HepG2 (cell line): ENCODE measurements at regions of chr4 and their contacts with region 1.

Region 1: DNA sequence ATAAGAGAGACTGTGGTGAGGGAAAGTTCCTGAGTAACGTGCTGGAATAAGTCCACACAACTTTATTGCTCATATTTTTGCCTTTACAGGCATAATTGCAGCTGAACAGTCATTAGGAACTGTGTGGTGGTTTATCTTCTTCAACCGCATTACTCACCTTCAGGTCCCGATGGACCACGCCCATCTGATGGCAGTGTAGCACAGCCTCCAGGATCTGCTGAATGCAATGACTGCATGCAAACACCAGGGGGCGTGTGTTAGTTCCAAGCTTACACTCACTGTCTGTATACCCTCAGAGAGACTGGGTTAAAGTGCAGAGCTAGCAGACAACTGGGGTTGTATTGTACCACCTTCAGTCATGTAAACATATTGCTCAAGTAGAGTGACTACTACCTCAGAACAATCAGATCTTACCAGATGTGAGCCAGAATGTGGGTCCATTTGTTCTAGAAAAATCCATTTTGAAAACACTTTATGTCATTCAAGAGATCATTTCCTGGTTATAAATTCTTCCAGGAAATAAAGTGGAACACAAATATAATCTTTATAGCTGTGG is 214.0 kb downstream of the CAMK2D start:
- DNase-seq: peak; percentile 97
- ATAC-seq: peak; percentile 100
- H3K4me3 ChIP-seq: no peak overlapping the region
- H3K27ac ChIP-seq: peak overlapping the region; percentile 32
- H3K4me1 ChIP-seq: peaks cover 22% of the 10 kb centered on the region
- H3K27me3 ChIP-seq: no peaks in the 10 kb centered on the region
- CTCF ChIP-seq: peak; percentile 98
- EP300 ChIP-seq: peak in 1 of 2 experiments; percentile 62; a peak in 2 of 4 replicates
- POLR2A ChIP-seq: no peak
- RAD21 ChIP-seq: peak; percentile 87

Region 2: GRCh38 chr4:113684534-113685091 is 137.0 kb after region 1 on chr4:
- CTCF ChIA-PET with region 1: interaction called, 4 read pairs
- POLR2A ChIA-PET with region 1: no interaction called
- in situ Hi-C with region 1: no loop called
- intact Hi-C with region 1: loop called (anchors 1 kb)
- DNase-seq: peak; percentile 85
- ATAC-seq: peak; percentile 100
- H3K4me3 ChIP-seq: no peak overlapping the region
- H3K27ac ChIP-seq: no peak overlapping the region
- H3K4me1 ChIP-seq: peaks cover 42% of the 10 kb centered on the region
- H3K27me3 ChIP-seq: no peaks in the 10 kb centered on the region
- CTCF ChIP-seq: peak; percentile 55
- EP300 ChIP-seq: no peak
- POLR2A ChIP-seq: no peak
- RAD21 ChIP-seq: peak; percentile 52

Region 3: DNA sequence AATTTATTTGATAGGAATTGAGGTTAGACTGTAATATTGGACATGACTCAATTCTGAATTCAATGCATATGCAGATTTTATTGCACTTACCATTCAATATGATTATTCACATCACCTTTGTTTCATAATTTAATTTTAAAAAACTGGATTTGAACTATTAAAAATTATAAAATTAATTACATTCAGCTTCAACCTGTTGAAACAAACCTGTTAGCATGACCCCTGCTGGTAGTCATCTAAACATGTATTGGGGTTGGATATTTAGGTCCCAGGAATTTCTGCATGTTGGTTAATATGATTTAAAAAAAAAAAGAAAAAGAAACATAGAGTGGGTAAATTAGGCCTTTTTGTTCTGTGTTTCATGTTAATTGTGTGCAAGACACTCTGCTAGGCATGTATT is 346.0 kb after region 1 on chr4:
- CTCF ChIA-PET with region 1: no interaction called
- POLR2A ChIA-PET with region 1: no interaction called
- in situ Hi-C with region 1: no loop called
- intact Hi-C with region 1: loop called (anchors 1 kb)
- DNase-seq: peak; percentile 14
- ATAC-seq: no peak
- H3K4me3 ChIP-seq: no peak overlapping the region
- H3K27ac ChIP-seq: no peak overlapping the region
- H3K4me1 ChIP-seq: no peaks in the 10 kb centered on the region
- H3K27me3 ChIP-seq: no peaks in the 10 kb centered on the region; a peak in 1 of 5 replicates
- CTCF ChIP-seq: no peak
- EP300 ChIP-seq: no peak
- POLR2A ChIP-seq: no peak
- RAD21 ChIP-seq: no peak